Breast epithelium (tissue), 4 donors: ENCODE measurements at regions of chr9 and their contacts with region 1.

Region 1: GRCh38 chr9:71515626-71516025 is 252.7 kb downstream of the CEMIP2 start:
- DNase-seq: no peak
- H3K4me3 ChIP-seq: no peak overlapping the region
- H3K27ac ChIP-seq: peak overlapping the region in 1 of 2 donors; percentile 0
- H3K4me1 ChIP-seq: peaks cover 0 to 3% of the 10 kb centered on the region in 2 donors
- H3K27me3 ChIP-seq: no peaks in the 10 kb centered on the region
- CTCF ChIP-seq: no peak
- POLR2A ChIP-seq: no peak

Region 2: GRCh38 chr9:71541436-71541835 is 25.8 kb after region 1 on chr9:
- intact Hi-C with region 1: loop called (anchors 2 kb)
- DNase-seq: no peak
- H3K4me3 ChIP-seq: no peak overlapping the region
- H3K27ac ChIP-seq: no peak overlapping the region
- H3K4me1 ChIP-seq: no peaks in the 10 kb centered on the region
- H3K27me3 ChIP-seq: no peaks in the 10 kb centered on the region
- CTCF ChIP-seq: no peak
- POLR2A ChIP-seq: no peak

Region 3: GRCh38 chr9:72333709-72334108 is 818.1 kb after region 1 on chr9:
- intact Hi-C with region 1: no loop called
- DNase-seq: no peak
- H3K4me3 ChIP-seq: no peak overlapping the region
- H3K27ac ChIP-seq: no peak overlapping the region
- H3K4me1 ChIP-seq: no peaks in the 10 kb centered on the region
- H3K27me3 ChIP-seq: no peaks in the 10 kb centered on the region
- CTCF ChIP-seq: no peak
- POLR2A ChIP-seq: no peak